Common myeloid progenitor, CD34-positive (primary cell): ENCODE measurements at regions of chr13 and their contacts with region 1.

Region 1: GRCh38 chr13:113562085-113562749 is 22.3 kb upstream of the TFDP1 start:
- DNase-seq: peak; percentile 70 to 83 (median 80)
- H3K4me3 ChIP-seq: no peak overlapping the region
- H3K27ac ChIP-seq: no peak overlapping the region
- H3K4me1 ChIP-seq: peaks cover 0 to 2% (median 0%) of the 10 kb centered on the region in 4 experiments
- H3K27me3 ChIP-seq: peaks cover 0 to 12% (median 0%) of the 10 kb centered on the region in 5 experiments

Region 2: DNA sequence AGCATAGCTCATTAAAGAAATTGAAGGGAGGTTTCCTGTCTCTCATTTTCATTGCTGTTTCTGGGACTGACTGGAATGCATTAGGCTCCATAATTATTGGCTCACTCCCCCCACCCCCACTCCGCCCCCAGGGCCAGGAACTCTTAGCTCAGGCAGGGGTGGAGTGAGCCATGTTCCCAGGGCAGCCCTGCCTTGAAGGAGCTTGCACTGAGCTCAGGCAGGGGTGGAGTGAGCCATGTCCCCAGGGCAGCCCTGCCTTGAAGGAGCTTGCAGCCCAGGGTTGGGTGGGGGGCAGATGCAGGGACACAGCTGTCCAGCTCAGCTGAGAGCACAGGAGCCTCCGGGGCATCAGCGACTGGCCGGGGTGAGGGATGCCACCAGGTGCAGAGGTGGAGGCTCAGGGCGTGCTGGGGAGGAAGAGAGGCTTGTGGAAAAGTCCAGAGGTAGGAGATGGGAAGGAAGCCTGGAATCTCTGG is 16.7 kb before region 1 on chr13:
- CTCF ChIA-PET with region 1: interaction called, 10 read pairs
- POLR2A ChIA-PET with region 1: no interaction called
- DNase-seq: no peak
- H3K4me3 ChIP-seq: no peak overlapping the region
- H3K27ac ChIP-seq: no peak overlapping the region
- H3K4me1 ChIP-seq: no peaks in the 10 kb centered on the region
- H3K27me3 ChIP-seq: no peaks in the 10 kb centered on the region